PC-3 (cell line): ENCODE measurements at regions of chr5 and their contacts with region 1.

Region 1: DNA sequence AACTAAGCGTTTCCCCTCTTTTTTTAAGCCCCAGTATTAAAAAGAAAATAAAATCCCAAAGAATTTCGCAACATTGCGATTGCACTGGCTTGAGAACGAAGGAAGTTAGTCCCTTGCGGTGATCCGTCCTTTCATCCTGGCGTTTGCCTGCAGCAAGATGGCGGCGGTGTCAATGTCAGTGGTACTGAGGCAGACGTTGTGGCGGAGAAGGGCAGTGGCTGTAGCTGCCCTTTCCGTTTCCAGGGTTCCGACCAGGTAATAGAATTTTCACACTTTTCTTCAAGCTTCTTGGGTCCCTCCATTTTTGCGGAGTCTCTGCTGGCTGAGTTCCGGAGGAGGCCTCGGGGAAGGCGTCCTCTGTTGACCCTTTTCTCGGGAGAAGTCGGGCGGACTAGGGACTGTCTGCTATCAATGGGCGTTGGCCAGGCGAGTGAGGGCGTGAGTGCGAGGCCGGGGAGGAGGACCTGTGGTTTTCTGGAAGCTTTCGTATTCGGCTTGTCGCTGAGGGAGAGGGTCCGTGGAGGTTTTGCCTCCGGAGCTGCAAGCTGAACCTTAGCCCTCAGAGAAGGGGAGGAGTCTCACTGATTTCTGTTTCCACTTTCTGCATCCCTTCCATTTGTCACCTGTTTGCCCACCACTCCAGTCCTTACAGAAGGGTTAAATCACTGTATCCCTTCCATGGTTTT is at the start of gene NDUFS4:
- DNase-seq: peak; percentile 70
- ATAC-seq: peak; percentile 82
- H3K4me3 ChIP-seq: peak within 1 kb of the TSS; percentile 85
- H3K27ac ChIP-seq: peak within 1 kb of the TSS; percentile 67
- H3K4me1 ChIP-seq: 0 out of 2 replicates have a peak, but pooled peaks cover 10% of the 10 kb centered on the region
- H3K27me3 ChIP-seq: no peaks in the 10 kb centered on the region
- CTCF ChIP-seq: no peak
- total RNA-seq, gene NDUFS4: 59.8 and 72.6 TPM in 2 replicates

Region 2: DNA sequence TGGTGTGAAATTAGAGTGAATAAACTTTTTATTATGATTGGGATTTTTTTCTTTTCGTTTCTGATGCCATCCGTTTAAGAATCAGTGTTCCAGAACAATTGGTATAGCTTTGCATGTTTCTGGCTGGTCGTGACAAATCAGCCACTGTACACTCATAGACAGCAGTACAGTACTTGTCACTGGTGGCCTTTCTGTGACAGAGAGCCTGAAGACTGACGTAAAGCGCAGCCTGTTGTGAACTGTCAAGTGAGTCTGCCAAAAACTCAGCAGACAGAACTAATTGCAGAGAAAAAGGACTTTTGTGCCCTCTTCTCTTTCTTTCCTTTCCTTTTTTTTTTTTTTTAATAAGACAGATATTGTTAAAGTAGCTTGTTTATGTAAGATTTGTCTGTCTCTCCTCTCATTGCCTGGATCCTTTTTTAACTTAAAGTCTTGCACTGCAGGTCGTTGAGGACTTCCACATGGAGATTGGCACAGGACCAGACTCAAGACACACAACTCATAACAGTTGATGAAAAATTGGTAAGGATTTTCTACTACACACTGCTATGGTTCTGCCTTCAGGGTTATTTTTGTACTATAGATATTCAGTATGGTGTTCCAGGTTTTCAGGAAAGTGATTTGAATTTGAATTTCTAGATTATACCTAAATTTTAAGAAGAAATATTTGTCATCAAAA is 42.5 kb after region 1 on chr5:
- CTCF ChIA-PET with region 1: no interaction called
- POLR2A ChIA-PET with region 1: no interaction called
- intact Hi-C with region 1: loop called (anchors 5 kb)
- DNase-seq: no peak
- ATAC-seq: no peak
- H3K4me3 ChIP-seq: no peak overlapping the region
- H3K27ac ChIP-seq: peak overlapping the region; percentile 55
- H3K4me1 ChIP-seq: peaks cover 31% of the 10 kb centered on the region
- H3K27me3 ChIP-seq: no peaks in the 10 kb centered on the region
- CTCF ChIP-seq: no peak

Region 3: DNA sequence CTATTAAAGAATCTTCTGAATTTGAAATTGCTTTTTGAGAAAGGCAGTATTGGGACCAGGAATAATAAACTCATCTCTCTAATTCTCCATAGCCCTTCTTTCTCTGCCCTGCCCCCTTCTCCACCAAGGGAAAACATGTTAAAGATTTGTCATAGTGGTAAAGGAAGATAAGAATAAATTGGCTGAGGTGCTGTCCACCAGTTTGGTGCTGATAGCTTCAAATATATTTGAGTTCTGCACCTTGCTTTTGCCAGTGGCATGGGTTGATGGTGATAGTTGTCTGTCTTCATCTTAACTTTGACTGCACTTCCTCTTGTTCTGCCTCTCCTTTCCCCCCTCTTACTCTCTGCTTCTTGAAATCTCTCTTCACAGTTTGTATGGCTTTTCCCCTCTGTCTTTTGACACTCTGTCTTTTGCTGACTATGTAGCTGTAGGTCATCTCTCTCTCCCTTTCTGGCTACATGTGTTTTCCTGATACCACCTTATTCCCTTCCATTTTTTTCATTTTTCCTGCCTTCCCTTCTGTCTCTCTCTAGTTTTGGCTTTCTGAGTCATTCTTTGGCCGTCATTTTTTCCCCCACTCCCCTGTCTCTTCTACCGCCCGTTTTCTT is 56.4 kb after region 1 on chr5:
- CTCF ChIA-PET with region 1: no interaction called
- POLR2A ChIA-PET with region 1: no interaction called
- intact Hi-C with region 1: no loop called
- DNase-seq: no peak
- ATAC-seq: no peak
- H3K4me3 ChIP-seq: no peak overlapping the region
- H3K27ac ChIP-seq: no peak overlapping the region
- H3K4me1 ChIP-seq: no peaks in the 10 kb centered on the region
- H3K27me3 ChIP-seq: no peaks in the 10 kb centered on the region
- CTCF ChIP-seq: no peak

Region 4: GRCh38 chr5:53784596-53784995 is 223.9 kb after region 1 on chr5:
- CTCF ChIA-PET with region 1: no interaction called
- POLR2A ChIA-PET with region 1: interaction called, 10 read pairs
- intact Hi-C with region 1: no loop called
- DNase-seq: no peak
- ATAC-seq: no peak
- H3K4me3 ChIP-seq: no peak overlapping the region
- H3K27ac ChIP-seq: no peak overlapping the region
- H3K4me1 ChIP-seq: peaks cover 6% of the 10 kb centered on the region
- H3K27me3 ChIP-seq: no peaks in the 10 kb centered on the region
- CTCF ChIP-seq: no peak

Region 5: GRCh38 chr5:53834500-53834899 is 273.9 kb after region 1 on chr5:
- CTCF ChIA-PET with region 1: no interaction called
- POLR2A ChIA-PET with region 1: no interaction called
- intact Hi-C with region 1: no loop called
- DNase-seq: no peak
- ATAC-seq: no peak
- H3K4me3 ChIP-seq: no peak overlapping the region
- H3K27ac ChIP-seq: no peak overlapping the region
- H3K4me1 ChIP-seq: no peaks in the 10 kb centered on the region
- H3K27me3 ChIP-seq: no peaks in the 10 kb centered on the region
- CTCF ChIP-seq: no peak